HepG2 (cell line): ENCODE measurements at regions of chr2 and their contacts with region 1.

Region 1: GRCh38 chr2:192194866-192195547 is at the start of gene TMEFF2:
- DNase-seq: peak; percentile 10
- ATAC-seq: peak; percentile 78
- H3K4me3 ChIP-seq: peak within 1 kb of the TSS; percentile 20 to 56 (median 32); a peak in 4 of 6 replicates
- H3K27ac ChIP-seq: no peak within 1 kb of the TSS
- H3K4me1 ChIP-seq: no peaks in the 10 kb centered on the region
- H3K27me3 ChIP-seq: peaks cover 12 to 46% of the 10 kb centered on the region in 2 experiments; a peak in 4 of 5 replicates
- CTCF ChIP-seq: peak; percentile 33; the same call in 1 of the 2 replicates
- EP300 ChIP-seq: no peak
- POLR2A ChIP-seq: no peak
- RAD21 ChIP-seq: no peak
- total RNA-seq, gene TMEFF2: not detected in 2 replicates

Region 2: GRCh38 chr2:192559541-192560120 is 364.6 kb after region 1 on chr2:
- CTCF ChIA-PET with region 1: no interaction called
- POLR2A ChIA-PET with region 1: no interaction called
- in situ Hi-C with region 1: no loop called
- intact Hi-C with region 1: loop called (anchors 10 kb)
- DNase-seq: no peak
- ATAC-seq: no peak
- H3K4me3 ChIP-seq: no peak overlapping the region
- H3K27ac ChIP-seq: no peak overlapping the region
- H3K4me1 ChIP-seq: no peaks in the 10 kb centered on the region
- H3K27me3 ChIP-seq: no peaks in the 10 kb centered on the region
- CTCF ChIP-seq: no peak
- EP300 ChIP-seq: no peak
- POLR2A ChIP-seq: no peak
- RAD21 ChIP-seq: no peak

Region 3: DNA sequence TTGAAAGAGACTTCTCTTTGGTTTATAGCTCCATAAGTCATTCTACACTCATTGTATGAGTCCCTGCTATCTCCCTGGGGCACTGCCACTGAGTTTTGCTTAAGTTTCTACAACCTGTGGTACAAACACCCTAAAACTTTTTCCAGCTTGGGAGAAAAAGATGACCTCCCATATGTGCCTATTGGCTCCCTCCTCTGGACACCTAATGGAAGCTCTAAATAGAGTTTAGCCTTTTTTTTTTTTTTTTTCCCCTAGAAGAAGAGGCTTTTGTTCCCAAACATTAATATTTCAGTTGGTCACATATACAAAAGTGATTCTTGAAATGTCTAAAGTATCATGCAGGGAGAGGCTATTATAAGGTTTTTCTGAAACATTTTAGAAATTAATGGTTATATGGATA is 546.9 kb after region 1 on chr2:
- CTCF ChIA-PET with region 1: no interaction called
- POLR2A ChIA-PET with region 1: no interaction called
- in situ Hi-C with region 1: no loop called
- intact Hi-C with region 1: loop called (anchors 5 kb)
- DNase-seq: peak; percentile 29
- ATAC-seq: peak; percentile 66
- H3K4me3 ChIP-seq: no peak overlapping the region
- H3K27ac ChIP-seq: no peak overlapping the region
- H3K4me1 ChIP-seq: no peaks in the 10 kb centered on the region
- H3K27me3 ChIP-seq: no peaks in the 10 kb centered on the region
- CTCF ChIP-seq: peak; percentile 33
- EP300 ChIP-seq: no peak
- POLR2A ChIP-seq: no peak
- RAD21 ChIP-seq: no peak